Activated CD4-positive, alpha-beta T cell treated with anti-CD3 and anti-CD28 coated beads, Interleukin-2, amount 10 ng/mL, durations not matched to agents 7 days and 5 days (primary cell): ENCODE measurements at regions of chr1 and their contacts with region 1.

Region 1: GRCh38 chr1:31955917-31956736 is 18.0 kb upstream of the PTP4A2 start:
- DNase-seq: peak; percentile 80
- H3K4me3 Mint-ChIP-seq: peak overlapping the region; percentile 11
- H3K27ac Mint-ChIP-seq: peak overlapping the region; percentile 84
- H3K4me1 Mint-ChIP-seq: peaks cover 80% of the 10 kb centered on the region
- H3K27me3 Mint-ChIP-seq: no peaks in the 10 kb centered on the region

Region 2: DNA sequence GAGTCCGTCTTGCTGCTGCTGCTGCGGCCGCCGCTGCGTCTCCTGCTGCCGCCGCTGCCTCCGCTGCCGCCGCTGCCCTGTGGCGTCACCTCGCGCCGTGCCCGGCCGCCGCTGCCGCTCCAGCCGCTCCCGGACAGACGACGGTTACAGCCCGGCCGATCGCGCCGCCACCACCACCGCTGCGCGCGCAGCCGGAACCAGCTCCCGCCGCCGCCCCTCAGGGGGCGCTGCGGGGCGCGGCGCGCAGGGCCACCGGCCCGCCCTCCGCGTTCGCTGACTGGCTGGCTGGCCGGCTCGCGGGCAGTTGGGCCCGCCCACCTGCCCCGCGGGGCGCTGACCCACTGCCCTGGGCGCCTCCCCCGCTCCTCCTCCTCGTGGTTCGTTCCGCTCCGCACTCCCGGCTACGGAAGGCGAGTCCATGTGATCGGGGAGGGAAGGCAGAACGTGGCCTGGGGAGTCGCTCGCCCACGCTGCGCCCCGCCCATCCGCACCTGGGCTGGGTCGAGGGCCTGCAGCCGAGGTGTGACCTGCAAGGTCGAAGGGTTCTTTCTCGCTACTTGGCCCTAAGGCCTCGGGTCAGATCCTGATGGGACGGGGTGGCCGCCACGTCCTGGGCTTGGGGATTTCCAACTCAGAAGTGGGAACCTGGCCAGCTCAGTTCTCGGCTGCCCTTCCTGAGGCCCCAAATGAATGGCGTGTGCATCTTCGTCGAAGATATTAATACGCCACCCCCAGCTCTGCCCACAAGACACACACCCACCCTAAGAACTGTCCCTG is 17.8 kb before region 1 on chr1 and contains the start of gene PTP4A2:
- CTCF ChIA-PET with region 1: interaction called, 371 read pairs
- POLR2A ChIA-PET with region 1: interaction called, 19 read pairs
- DNase-seq: peak; percentile 85
- H3K4me3 Mint-ChIP-seq: peak within 1 kb of the TSS; percentile 89
- H3K27ac Mint-ChIP-seq: peak within 1 kb of the TSS; percentile 97
- H3K4me1 Mint-ChIP-seq: peaks cover 79% of the 10 kb centered on the region
- H3K27me3 Mint-ChIP-seq: no peaks in the 10 kb centered on the region
- total RNA-seq, gene PTP4A2: 334 to 347 TPM

Region 3: DNA sequence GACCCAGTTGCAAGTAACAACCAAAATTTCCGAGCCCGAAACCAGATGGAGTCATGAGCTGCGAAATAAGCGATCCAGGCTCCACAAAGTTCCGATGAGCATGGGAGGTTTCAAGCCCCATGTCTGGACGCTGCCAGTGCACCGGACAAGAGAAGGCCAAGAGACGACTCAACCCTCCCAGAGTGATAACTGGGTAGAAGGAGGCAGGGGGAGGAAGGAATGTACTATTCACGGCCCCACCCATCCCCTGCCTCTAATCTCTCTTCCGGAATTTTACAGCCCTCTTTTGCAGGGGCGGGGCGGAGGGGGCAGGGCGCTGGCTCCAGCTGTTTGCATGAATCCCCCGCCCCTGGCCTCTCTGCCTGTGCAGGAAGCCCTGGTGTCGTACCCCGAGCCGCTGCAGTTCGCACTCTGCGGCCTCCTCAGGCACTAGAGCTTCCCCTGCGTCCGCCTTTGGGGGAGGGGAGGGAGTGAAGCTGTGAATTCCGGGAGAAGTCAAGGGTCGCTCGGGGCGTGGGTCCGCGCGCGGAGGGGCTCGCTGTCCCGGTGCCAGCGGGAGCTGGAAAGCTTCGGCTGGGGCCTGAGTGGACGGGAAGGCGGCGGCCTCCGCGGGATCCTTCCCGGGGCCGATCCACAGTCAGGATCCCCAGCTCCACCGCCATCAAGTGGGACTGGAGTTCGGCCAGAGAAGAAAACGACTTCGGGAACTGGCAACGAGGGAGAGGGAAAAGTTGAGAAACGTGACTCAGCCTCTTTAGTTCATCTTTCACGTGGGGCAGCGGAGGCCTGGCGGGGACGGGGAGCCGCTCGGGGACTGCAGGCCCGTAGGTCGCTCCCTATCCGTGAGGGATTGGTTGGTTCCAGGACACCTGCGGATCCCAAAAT is 11.7 kb before region 1 on chr1:
- CTCF ChIA-PET with region 1: interaction called, 371 read pairs
- POLR2A ChIA-PET with region 1: interaction called, 19 read pairs
- DNase-seq: peak; percentile 96
- H3K4me3 Mint-ChIP-seq: peak overlapping the region; percentile 74
- H3K27ac Mint-ChIP-seq: peak overlapping the region; percentile 98
- H3K4me1 Mint-ChIP-seq: peaks cover 61% of the 10 kb centered on the region
- H3K27me3 Mint-ChIP-seq: no peaks in the 10 kb centered on the region

Region 4: GRCh38 chr1:31977385-31978131 is 21.4 kb after region 1 on chr1:
- CTCF ChIA-PET with region 1: interaction called, 10 read pairs
- POLR2A ChIA-PET with region 1: no interaction called
- DNase-seq: no peak
- H3K4me3 Mint-ChIP-seq: no peak overlapping the region
- H3K27ac Mint-ChIP-seq: peak overlapping the region; percentile 55
- H3K4me1 Mint-ChIP-seq: peaks cover 27% of the 10 kb centered on the region
- H3K27me3 Mint-ChIP-seq: no peaks in the 10 kb centered on the region